CD8-positive, alpha-beta T cell (primary cell): ENCODE measurements at regions of chr14 and their contacts with region 1.

Region 1: GRCh38 chr14:24114536-24115450 is at the starts of genes DCAF11 and NRL:
- DNase-seq: peak; percentile 95 to 100 (median 98)
- ATAC-seq: peak; percentile 82
- H3K4me3 ChIP-seq: peak within 1 kb of the TSS; percentile 72 to 87
- H3K4me3 Mint-ChIP-seq: peak within 1 kb of the TSS; percentile 98
- H3K27ac ChIP-seq: peak within 1 kb of the TSS; percentile 97 to 99
- H3K27ac Mint-ChIP-seq: peak within 1 kb of the TSS; percentile 100
- H3K4me1 ChIP-seq: peaks cover 19% of the 10 kb centered on the region
- H3K4me1 Mint-ChIP-seq: peaks cover 31% of the 10 kb centered on the region
- H3K27me3 ChIP-seq: no peaks in the 10 kb centered on the region
- H3K27me3 Mint-ChIP-seq: no peaks in the 10 kb centered on the region
- CTCF ChIP-seq: no peak
- total RNA-seq, gene DCAF11: 88.7 to 89.7 TPM
- total RNA-seq, gene NRL: 3.4 to 3.8 TPM

Region 2: GRCh38 chr14:23567192-23568020 is 547.4 kb before region 1 on chr14 and contains the start of gene AP1G2:
- CTCF ChIA-PET with region 1: interaction called, 3 read pairs
- POLR2A ChIA-PET with region 1: no interaction called
- intact Hi-C with region 1: loop called in 1 of 2 experiments (anchors 10 kb)
- DNase-seq: peak; percentile 66 to 92 (median 84)
- ATAC-seq: peak; percentile 90
- H3K4me3 ChIP-seq: peak within 1 kb of the TSS; percentile 75 to 97
- H3K4me3 Mint-ChIP-seq: peak within 1 kb of the TSS; percentile 99
- H3K27ac ChIP-seq: peak within 1 kb of the TSS; percentile 86
- H3K27ac Mint-ChIP-seq: peak within 1 kb of the TSS; percentile 97
- H3K4me1 ChIP-seq: peaks cover 20% of the 10 kb centered on the region
- H3K4me1 Mint-ChIP-seq: peaks cover 44% of the 10 kb centered on the region
- H3K27me3 ChIP-seq: no peaks in the 10 kb centered on the region
- H3K27me3 Mint-ChIP-seq: peaks cover 1% of the 10 kb centered on the region
- CTCF ChIP-seq: no peak
- total RNA-seq, gene AP1G2: 153 to 160 TPM

Region 3: DNA sequence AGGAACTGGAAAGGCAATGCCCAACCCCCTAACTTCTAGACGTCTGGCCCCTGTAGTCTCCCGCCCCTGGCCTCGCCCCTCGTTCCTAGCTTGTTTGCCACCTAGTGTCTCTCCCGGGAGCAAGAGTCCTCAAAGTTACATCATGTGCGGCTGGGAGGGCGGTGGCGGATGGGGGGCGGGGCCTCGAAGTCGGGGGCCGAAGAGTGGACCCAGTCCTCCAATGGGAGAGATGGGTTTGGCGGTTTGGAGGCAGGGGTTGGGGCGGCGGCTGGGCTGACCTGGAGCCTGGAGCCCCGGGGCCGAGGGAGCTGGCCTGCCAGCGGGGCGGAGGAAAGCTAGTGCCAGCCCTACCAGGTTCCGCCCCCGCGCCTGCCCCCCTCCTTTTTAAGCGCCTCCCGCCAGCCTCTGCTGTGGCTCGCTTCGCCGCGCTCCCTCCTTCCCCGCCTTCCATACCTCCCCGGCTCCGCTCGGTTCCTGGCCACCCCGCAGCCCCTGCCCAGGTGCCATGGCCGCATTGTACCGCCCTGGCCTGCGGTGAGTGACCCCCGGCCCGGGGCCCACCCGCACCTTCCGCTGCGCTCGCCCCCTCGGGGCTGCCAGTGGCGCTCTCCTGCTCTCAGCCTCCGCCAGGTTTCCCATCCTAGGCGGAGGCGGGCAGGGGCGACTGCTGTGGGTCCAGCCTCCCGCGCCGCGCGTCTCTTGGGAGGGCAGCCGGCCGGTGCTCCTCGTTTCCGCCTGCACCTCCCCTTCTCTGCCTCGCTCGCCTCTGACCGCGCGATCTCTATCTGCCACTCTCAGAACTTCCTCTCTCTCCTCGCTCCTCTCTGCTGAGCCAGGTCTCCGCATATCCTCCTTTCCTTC is 20.7 kb before region 1 on chr14 and contains the start of gene PCK2:
- CTCF ChIA-PET with region 1: interaction called, 217 read pairs
- POLR2A ChIA-PET with region 1: interaction called, 12 read pairs
- intact Hi-C with region 1: loop called (anchors 1 to 2 kb)
- DNase-seq: peak; percentile 39 to 82 (median 68)
- ATAC-seq: peak; percentile 79
- H3K4me3 ChIP-seq: peak within 1 kb of the TSS; percentile 69 to 99
- H3K4me3 Mint-ChIP-seq: peak within 1 kb of the TSS; percentile 98
- H3K27ac ChIP-seq: peak within 1 kb of the TSS; percentile 69 to 76
- H3K27ac Mint-ChIP-seq: peak within 1 kb of the TSS; percentile 98
- H3K4me1 ChIP-seq: peaks cover 19% of the 10 kb centered on the region
- H3K4me1 Mint-ChIP-seq: peaks cover 37% of the 10 kb centered on the region
- H3K27me3 ChIP-seq: no peaks in the 10 kb centered on the region
- H3K27me3 Mint-ChIP-seq: no peaks in the 10 kb centered on the region
- CTCF ChIP-seq: no peak
- total RNA-seq, gene PCK2: 4.9 to 5.2 TPM

Region 4: GRCh38 chr14:24160850-24161804 is 46.3 kb after region 1 on chr14 and contains the start of gene IRF9:
- CTCF ChIA-PET with region 1: interaction called, 55 read pairs
- POLR2A ChIA-PET with region 1: interaction called, 30 read pairs
- intact Hi-C with region 1: loop called (anchors 1 kb)
- DNase-seq: peak; percentile 95 to 99 (median 97)
- ATAC-seq: peak; percentile 85
- H3K4me3 ChIP-seq: peak within 1 kb of the TSS; percentile 80 to 90
- H3K4me3 Mint-ChIP-seq: peak within 1 kb of the TSS; percentile 99
- H3K27ac ChIP-seq: peak within 1 kb of the TSS; percentile 92 to 94
- H3K27ac Mint-ChIP-seq: peak within 1 kb of the TSS; percentile 99
- H3K4me1 ChIP-seq: peaks cover 47% of the 10 kb centered on the region
- H3K4me1 Mint-ChIP-seq: peaks cover 49% of the 10 kb centered on the region
- H3K27me3 ChIP-seq: no peaks in the 10 kb centered on the region
- H3K27me3 Mint-ChIP-seq: no peaks in the 10 kb centered on the region
- CTCF ChIP-seq: peak; percentile 92
- total RNA-seq, gene IRF9: 270 to 307 TPM

Region 5: GRCh38 chr14:24232121-24232644 is 117.4 kb after region 1 on chr14 and contains the start of gene NEDD8:
- CTCF ChIA-PET with region 1: no interaction called
- POLR2A ChIA-PET with region 1: interaction called, 5 read pairs
- intact Hi-C with region 1: loop called in 1 of 2 experiments (anchors 1 kb)
- DNase-seq: peak; percentile 72 to 93 (median 89)
- ATAC-seq: peak; percentile 88
- H3K4me3 ChIP-seq: peak within 1 kb of the TSS; percentile 92 to 98
- H3K4me3 Mint-ChIP-seq: peak within 1 kb of the TSS; percentile 97
- H3K27ac ChIP-seq: peak within 1 kb of the TSS; percentile 72 to 87
- H3K27ac Mint-ChIP-seq: peak within 1 kb of the TSS; percentile 97
- H3K4me1 ChIP-seq: peaks cover 27% of the 10 kb centered on the region
- H3K4me1 Mint-ChIP-seq: peaks cover 59% of the 10 kb centered on the region
- H3K27me3 ChIP-seq: no peaks in the 10 kb centered on the region
- H3K27me3 Mint-ChIP-seq: no peaks in the 10 kb centered on the region
- CTCF ChIP-seq: no peak
- total RNA-seq, gene NEDD8: 39.9 to 48.5 TPM

Region 6: DNA sequence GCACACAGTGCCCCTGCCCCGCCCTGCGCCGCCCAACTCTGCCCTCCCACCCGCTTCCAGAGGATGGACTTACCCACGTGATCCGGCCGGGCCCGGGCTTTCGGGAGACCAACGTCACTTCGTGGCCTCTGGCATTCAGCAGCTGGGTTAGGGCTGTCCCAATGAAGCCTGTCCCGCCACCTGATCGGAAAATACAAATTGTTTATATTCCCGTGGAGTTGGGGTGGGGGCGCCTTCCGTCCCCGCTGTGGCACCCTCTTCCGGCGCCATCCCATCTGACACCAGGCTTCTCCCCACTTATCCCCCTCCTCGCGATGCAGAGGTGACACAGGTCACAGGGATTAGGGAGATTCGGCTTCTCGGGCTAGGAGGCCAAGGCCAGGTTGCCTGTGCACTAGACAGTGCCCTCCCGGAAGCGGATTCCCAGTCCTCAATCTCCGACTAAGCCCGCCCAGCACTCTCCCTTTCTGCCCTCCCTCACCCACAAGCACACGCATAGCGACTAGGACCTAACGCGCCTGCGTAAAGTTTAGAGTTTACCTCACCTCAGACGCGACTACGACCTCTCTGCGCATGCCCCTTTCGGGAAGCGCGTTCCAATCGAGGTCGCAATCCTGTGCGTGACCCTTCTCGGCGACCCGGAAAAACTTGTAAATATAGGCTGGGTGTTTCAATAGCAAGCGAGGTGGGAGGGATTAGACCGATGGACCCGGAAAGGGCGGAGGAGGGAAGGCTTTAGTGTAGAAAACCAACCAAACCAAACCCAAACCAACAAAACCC is 327.7 kb after region 1 on chr14 and contains the start of gene SDR39U1:
- CTCF ChIA-PET with region 1: interaction called, 3 read pairs
- POLR2A ChIA-PET with region 1: no interaction called
- intact Hi-C with region 1: loop called in 1 of 2 experiments (anchors 1 kb)
- DNase-seq: peak; percentile 93 to 100 (median 95)
- ATAC-seq: peak; percentile 89
- H3K4me3 ChIP-seq: peak within 1 kb of the TSS; percentile 77 to 89
- H3K4me3 Mint-ChIP-seq: peak within 1 kb of the TSS; percentile 95
- H3K27ac ChIP-seq: peak within 1 kb of the TSS; percentile 96
- H3K27ac Mint-ChIP-seq: peak within 1 kb of the TSS; percentile 97
- H3K4me1 ChIP-seq: peaks cover 35% of the 10 kb centered on the region
- H3K4me1 Mint-ChIP-seq: peaks cover 45% of the 10 kb centered on the region
- H3K27me3 ChIP-seq: no peaks in the 10 kb centered on the region
- H3K27me3 Mint-ChIP-seq: no peaks in the 10 kb centered on the region
- CTCF ChIP-seq: no peak
- total RNA-seq, gene SDR39U1: 75.0 to 84.4 TPM